Endothelial cell of umbilical vein (primary cell): ENCODE measurements at regions of chr3 and their contacts with region 1.

Region 1: GRCh38 chr3:147410526-147411237 is 1.5 kb downstream of the ZIC1 start:
- DNase-seq: no peak
- H3K4me3 ChIP-seq: peak overlapping the region in 1 of 3 experiments; percentile 18
- H3K27ac ChIP-seq: no peak overlapping the region
- H3K4me1 ChIP-seq: peaks cover 6% of the 10 kb centered on the region
- H3K27me3 ChIP-seq: peaks cover 93 to 98% of the 10 kb centered on the region in 2 experiments
- CTCF ChIP-seq: no peak
- POLR2A ChIP-seq: no peak

Region 2: DNA sequence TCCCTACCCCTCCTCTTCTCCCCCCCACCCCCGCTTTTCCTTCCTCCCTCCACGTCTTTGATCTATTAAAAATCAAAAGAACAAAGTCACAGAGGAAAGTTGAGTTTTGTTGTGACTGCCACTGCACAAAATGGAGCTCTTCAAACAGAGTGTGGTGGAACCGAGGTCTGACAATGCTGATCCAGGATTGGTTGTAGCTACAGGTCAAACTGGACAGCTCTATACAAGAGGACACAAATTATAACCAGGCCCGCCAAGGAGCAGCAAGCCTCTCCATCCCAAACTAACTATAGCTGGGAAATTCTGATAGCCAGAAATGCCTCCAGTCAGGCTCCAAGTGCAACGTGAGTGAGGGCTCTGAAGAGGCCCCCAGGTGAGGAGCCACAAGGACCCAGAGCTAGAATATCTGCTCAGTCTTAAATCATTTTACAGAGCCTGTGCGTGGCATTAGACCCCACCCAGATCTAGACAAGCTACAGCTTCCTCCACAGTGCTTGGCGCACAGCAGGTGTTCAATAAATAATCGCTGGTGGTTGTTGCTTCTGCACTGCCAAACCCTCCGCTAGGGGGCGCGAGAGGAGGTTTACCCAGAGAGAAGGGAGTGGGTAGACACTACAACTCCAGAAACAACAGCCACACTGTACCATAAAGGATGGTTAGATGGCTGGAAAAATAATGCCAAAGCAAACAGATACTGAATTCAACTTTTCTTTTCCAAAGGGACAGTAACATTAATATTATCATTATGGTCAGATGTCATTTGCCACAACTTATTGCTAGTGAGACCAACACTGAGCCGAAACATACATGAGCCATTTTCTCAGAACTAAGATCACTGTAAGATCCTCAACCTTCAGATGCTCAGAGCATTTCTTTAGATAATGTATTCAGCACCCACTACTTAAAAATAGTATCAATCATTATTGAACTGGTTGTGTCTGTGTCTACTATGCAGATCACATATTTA is 48.9 kb before region 1 on chr3:
- CTCF ChIA-PET with region 1: interaction called, 3 read pairs
- POLR2A ChIA-PET with region 1: no interaction called
- dilution Hi-C with region 1: no loop called
- intact Hi-C with region 1: loop called (anchors 5 kb)
- DNase-seq: no peak
- H3K4me3 ChIP-seq: no peak overlapping the region
- H3K27ac ChIP-seq: no peak overlapping the region
- H3K4me1 ChIP-seq: no peaks in the 10 kb centered on the region
- H3K27me3 ChIP-seq: peaks cover 78 to 98% of the 10 kb centered on the region in 2 experiments
- CTCF ChIP-seq: peak; percentile 57 to 73
- POLR2A ChIP-seq: no peak

Region 3: DNA sequence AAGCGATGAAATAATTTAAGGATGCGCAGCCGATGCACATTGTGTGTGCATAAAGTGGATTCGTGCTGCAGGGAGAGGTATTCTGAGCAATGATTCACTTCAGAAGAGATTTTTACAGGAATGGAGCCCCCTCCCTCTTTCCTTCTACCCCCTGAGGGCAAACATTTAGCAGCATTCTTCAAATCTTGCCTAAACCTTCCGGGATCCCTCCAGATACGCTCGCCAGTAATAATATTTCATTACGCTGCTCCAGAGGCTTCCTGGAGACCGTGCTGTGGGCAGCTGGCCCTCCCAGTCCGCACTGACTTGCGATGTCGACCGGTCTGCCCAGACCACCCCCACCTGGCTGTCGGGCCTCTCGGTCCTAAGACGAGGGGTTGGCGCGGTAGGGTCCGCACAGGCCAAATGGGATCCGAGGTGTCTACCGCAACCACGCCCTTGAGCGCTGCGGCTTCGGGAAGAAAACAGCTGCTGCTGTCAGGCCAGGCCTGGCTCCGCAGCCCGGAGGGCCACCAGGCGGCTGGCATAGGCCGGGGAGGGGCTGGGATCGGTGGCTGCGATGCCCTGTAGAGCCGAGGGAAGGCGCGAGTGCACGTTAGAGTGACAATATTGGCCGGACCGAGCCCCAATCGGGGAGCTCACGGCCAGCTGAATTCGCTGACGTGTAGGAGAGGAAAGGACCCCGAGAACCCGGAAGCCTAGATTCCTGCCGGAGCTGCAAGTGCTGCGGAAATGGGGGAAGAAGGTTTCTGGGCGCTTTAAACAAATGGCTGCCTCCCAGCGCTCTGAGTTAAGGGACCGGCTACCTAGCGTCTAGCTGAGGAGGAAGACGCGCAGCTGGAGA is 18.7 kb before region 1 on chr3:
- CTCF ChIA-PET with region 1: interaction called, 7 read pairs
- POLR2A ChIA-PET with region 1: no interaction called
- dilution Hi-C with region 1: no loop called
- intact Hi-C with region 1: loop called (anchors 1 kb)
- DNase-seq: peak; percentile 22
- H3K4me3 ChIP-seq: no peak overlapping the region
- H3K27ac ChIP-seq: no peak overlapping the region
- H3K4me1 ChIP-seq: peaks cover 6% of the 10 kb centered on the region
- H3K27me3 ChIP-seq: peaks cover 91 to 97% of the 10 kb centered on the region in 2 experiments
- CTCF ChIP-seq: peak in 1 of 2 donors; percentile 21
- POLR2A ChIP-seq: no peak